H1 (cell line): ENCODE measurements at regions of chr19 and their contacts with region 1.

Region 1: GRCh38 chr19:42343344-42344110 is 18.1 kb downstream of the MEGF8 start:
- DNase-seq: peak in 1 of 2 experiments; percentile 82
- H3K4me3 ChIP-seq: no peak overlapping the region
- H3K27ac ChIP-seq: no peak overlapping the region
- H3K4me1 ChIP-seq: no peaks in the 10 kb centered on the region
- H3K27me3 ChIP-seq: no peaks in the 10 kb centered on the region
- CTCF ChIP-seq: peak; percentile 89 to 99 (median 95)
- EP300 ChIP-seq: no peak
- POLR2A ChIP-seq: no peak
- RAD21 ChIP-seq: peak; percentile 25 to 55; a peak in 2 of 4 replicates

Region 2: GRCh38 chr19:42325896-42326771 is 17.4 kb before region 1 on chr19:
- CTCF ChIA-PET with region 1: interaction called, 90 read pairs
- POLR2A ChIA-PET with region 1: no interaction called
- DNase-seq: no peak
- H3K4me3 ChIP-seq: peak overlapping the region; percentile 72 to 89 (median 78)
- H3K27ac ChIP-seq: no peak overlapping the region
- H3K4me1 ChIP-seq: peaks cover 0 to 4% (median 1%) of the 10 kb centered on the region in 4 experiments; a peak in 2 of 7 replicates
- H3K27me3 ChIP-seq: peaks cover 0 to 15% (median 8%) of the 10 kb centered on the region in 4 experiments; a peak in 5 of 7 replicates
- CTCF ChIP-seq: peak in 1 of 3 experiments; percentile 22; a peak in 1 of 4 replicates
- EP300 ChIP-seq: no peak
- POLR2A ChIP-seq: no peak
- RAD21 ChIP-seq: no peak